ENCODE measurements at regions of chr11 and their contacts with region 1.

Region 1: GRCh38 chr11:95764267-95764898 is 25.2 kb downstream of the FAM76B start:
- DNase-seq: peak; percentile 67
- H3K4me3 ChIP-seq: no peak overlapping the region
- H3K27ac ChIP-seq: no peak overlapping the region
- H3K4me1 ChIP-seq: no peaks in the 10 kb centered on the region
- CTCF ChIP-seq: peak; percentile 90

Region 2: GRCh38 chr11:95505927-95506426 is 258.4 kb before region 1 on chr11:
- CTCF ChIA-PET with region 1: no interaction called
- POLR2A ChIA-PET with region 1: no interaction called
- intact Hi-C with region 1: loop called (anchors 5 kb)
- DNase-seq: no peak
- H3K4me3 ChIP-seq: no peak overlapping the region
- H3K27ac ChIP-seq: no peak overlapping the region
- H3K4me1 ChIP-seq: no peaks in the 10 kb centered on the region
- CTCF ChIP-seq: no peak

Region 3: GRCh38 chr11:95705485-95706124 is 58.8 kb before region 1 on chr11:
- CTCF ChIA-PET with region 1: interaction called, 3 read pairs
- POLR2A ChIA-PET with region 1: no interaction called
- intact Hi-C with region 1: loop called (anchors 2 kb)
- DNase-seq: peak; percentile 76
- H3K4me3 ChIP-seq: no peak overlapping the region
- H3K27ac ChIP-seq: no peak overlapping the region
- H3K4me1 ChIP-seq: peaks cover 6% of the 10 kb centered on the region
- CTCF ChIP-seq: peak; percentile 98

Region 4: GRCh38 chr11:95739108-95739938 is 25.1 kb before region 1 on chr11:
- CTCF ChIA-PET with region 1: no interaction called
- POLR2A ChIA-PET with region 1: interaction called, 10 read pairs
- intact Hi-C with region 1: no loop called
- DNase-seq: peak; percentile 8
- H3K4me3 ChIP-seq: no peak overlapping the region
- H3K27ac ChIP-seq: no peak overlapping the region
- H3K4me1 ChIP-seq: no peaks in the 10 kb centered on the region
- CTCF ChIP-seq: peak; percentile 58